ENCODE measurements at regions of chr9 and their contacts with region 1.

Region 1: GRCh38 chr9:5186416-5187169 is 1.2 kb upstream of the INSL6 start:
- DNase-seq: peak; percentile 48
- ATAC-seq: peak; percentile 85
- H3K4me3 ChIP-seq: no peak overlapping the region
- H3K27ac ChIP-seq: no peak overlapping the region
- H3K4me1 ChIP-seq: no peaks in the 10 kb centered on the region
- H3K27me3 ChIP-seq: no peaks in the 10 kb centered on the region
- CTCF ChIP-seq: peak; percentile 65 to 74 (median 71); a peak in 5 of 6 replicates
- POLR2A ChIP-seq: no peak
- RAD21 ChIP-seq: peak; percentile 82

Region 2: GRCh38 chr9:4750023-4750673 is 436.4 kb before region 1 on chr9:
- CTCF ChIA-PET with region 1: no interaction called
- POLR2A ChIA-PET with region 1: no interaction called
- RAD21 ChIA-PET with region 1: no interaction called
- intact Hi-C with region 1: loop called (anchors 5 kb)
- DNase-seq: no peak
- ATAC-seq: peak; percentile 84
- H3K4me3 ChIP-seq: no peak overlapping the region
- H3K27ac ChIP-seq: no peak overlapping the region
- H3K4me1 ChIP-seq: no peaks in the 10 kb centered on the region
- H3K27me3 ChIP-seq: no peaks in the 10 kb centered on the region
- CTCF ChIP-seq: peak; percentile 51 to 67 (median 66)
- POLR2A ChIP-seq: no peak
- RAD21 ChIP-seq: peak; percentile 61

Region 3: DNA sequence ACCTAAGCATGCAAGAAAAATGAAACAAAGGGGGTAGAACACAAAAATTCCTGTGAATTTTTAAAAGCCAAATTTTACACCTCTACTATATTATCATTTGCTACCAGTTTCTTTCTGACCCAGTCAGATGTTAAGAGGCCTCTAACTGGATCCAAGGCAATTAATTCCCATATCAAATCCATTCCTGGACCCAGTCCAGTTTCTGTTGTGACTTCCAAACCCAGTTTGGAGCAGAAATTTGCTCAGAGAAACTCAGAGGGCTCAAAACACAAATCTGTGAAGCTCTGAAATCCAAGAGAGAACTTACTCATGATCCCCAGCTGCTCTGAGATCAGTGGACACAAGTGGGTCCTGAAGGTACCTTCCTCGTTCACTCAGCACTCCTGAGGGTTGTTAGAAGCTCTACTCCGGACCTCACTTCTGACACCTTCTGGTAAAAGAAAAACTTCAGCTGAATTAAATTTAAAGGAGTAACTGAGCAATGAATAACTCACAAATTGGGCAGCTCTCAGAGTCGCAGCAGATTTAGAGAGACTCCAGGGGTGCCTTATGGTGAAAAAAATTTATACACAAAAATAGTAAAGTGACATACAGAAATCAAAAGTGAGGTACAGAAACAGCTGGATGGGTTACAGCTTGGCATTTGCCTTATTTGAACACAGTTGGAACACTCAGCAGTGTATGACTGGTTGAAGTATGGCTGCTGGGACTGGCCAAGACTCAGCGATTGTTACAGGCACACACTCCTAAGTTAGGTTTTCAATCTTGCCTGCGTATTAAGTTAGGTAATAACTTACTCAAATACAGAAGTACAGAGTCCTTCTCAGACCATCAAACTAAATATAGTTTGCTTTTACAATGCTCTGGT is 77.0 kb after region 1 on chr9:
- CTCF ChIA-PET with region 1: interaction called, 8 read pairs
- POLR2A ChIA-PET with region 1: no interaction called
- RAD21 ChIA-PET with region 1: interaction called in 1 of 2 experiments, 3 read pairs
- intact Hi-C with region 1: loop called (anchors 5 kb)
- DNase-seq: peak; percentile 12
- ATAC-seq: peak; percentile 87
- H3K4me3 ChIP-seq: no peak overlapping the region
- H3K27ac ChIP-seq: no peak overlapping the region
- H3K4me1 ChIP-seq: no peaks in the 10 kb centered on the region
- H3K27me3 ChIP-seq: no peaks in the 10 kb centered on the region
- CTCF ChIP-seq: peak in 2 of 3 experiments; percentile 23 to 31; a peak in 2 of 6 replicates
- POLR2A ChIP-seq: no peak
- RAD21 ChIP-seq: peak; percentile 36

Region 4: DNA sequence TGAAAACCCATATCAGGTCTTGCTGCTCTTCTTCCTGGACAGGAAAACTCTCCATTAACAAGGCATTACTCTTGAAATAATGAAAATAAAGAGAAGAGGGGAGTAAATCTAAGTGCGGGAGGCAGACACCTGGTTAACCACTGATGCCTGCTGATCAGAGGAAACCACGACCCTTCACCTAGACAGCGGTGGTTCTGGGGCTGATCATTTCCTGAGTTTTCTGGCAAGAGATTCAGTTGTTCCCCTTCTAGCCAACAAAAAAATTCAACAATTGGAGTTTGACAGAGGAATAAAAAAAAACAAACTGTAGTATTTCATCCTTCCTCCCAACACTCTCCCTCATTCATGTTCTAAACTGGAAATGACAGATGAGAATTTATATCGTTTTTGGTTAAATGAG is 115.0 kb after region 1 on chr9:
- CTCF ChIA-PET with region 1: no interaction called
- POLR2A ChIA-PET with region 1: no interaction called
- RAD21 ChIA-PET with region 1: no interaction called
- intact Hi-C with region 1: no loop called
- DNase-seq: no peak
- ATAC-seq: no peak
- H3K4me3 ChIP-seq: no peak overlapping the region
- H3K27ac ChIP-seq: no peak overlapping the region
- H3K4me1 ChIP-seq: no peaks in the 10 kb centered on the region
- H3K27me3 ChIP-seq: no peaks in the 10 kb centered on the region
- CTCF ChIP-seq: no peak
- POLR2A ChIP-seq: no peak
- RAD21 ChIP-seq: no peak

Region 5: GRCh38 chr9:5425006-5425628 is 238.5 kb after region 1 on chr9:
- CTCF ChIA-PET with region 1: interaction called, 19 read pairs
- POLR2A ChIA-PET with region 1: no interaction called
- RAD21 ChIA-PET with region 1: interaction called in 1 of 2 experiments, 3 read pairs
- intact Hi-C with region 1: loop called (anchors 1 kb)
- DNase-seq: no peak
- ATAC-seq: peak; percentile 82
- H3K4me3 ChIP-seq: no peak overlapping the region
- H3K27ac ChIP-seq: no peak overlapping the region
- H3K4me1 ChIP-seq: no peaks in the 10 kb centered on the region
- H3K27me3 ChIP-seq: no peaks in the 10 kb centered on the region
- CTCF ChIP-seq: peak; percentile 40 to 71 (median 69); a peak in 5 of 6 replicates
- POLR2A ChIP-seq: no peak
- RAD21 ChIP-seq: peak; percentile 72

Region 6: GRCh38 chr9:5442400-5443011 is 255.9 kb after region 1 on chr9:
- CTCF ChIA-PET with region 1: interaction called, 22 read pairs
- POLR2A ChIA-PET with region 1: no interaction called
- RAD21 ChIA-PET with region 1: interaction called, 3 to 6 read pairs
- intact Hi-C with region 1: loop called (anchors 5 kb)
- DNase-seq: no peak
- ATAC-seq: peak; percentile 54
- H3K4me3 ChIP-seq: no peak overlapping the region
- H3K27ac ChIP-seq: no peak overlapping the region
- H3K4me1 ChIP-seq: peaks cover 13 to 33% of the 10 kb centered on the region in 2 experiments
- H3K27me3 ChIP-seq: no peaks in the 10 kb centered on the region
- CTCF ChIP-seq: peak; percentile 46 to 68 (median 53); a peak in 5 of 6 replicates
- POLR2A ChIP-seq: no peak
- RAD21 ChIP-seq: peak; percentile 71

Region 7: GRCh38 chr9:5468850-5469249 is 282.3 kb after region 1 on chr9:
- CTCF ChIA-PET with region 1: no interaction called
- POLR2A ChIA-PET with region 1: no interaction called
- RAD21 ChIA-PET with region 1: no interaction called
- intact Hi-C with region 1: no loop called
- DNase-seq: no peak
- ATAC-seq: no peak
- H3K4me3 ChIP-seq: no peak overlapping the region
- H3K27ac ChIP-seq: no peak overlapping the region
- H3K4me1 ChIP-seq: no peaks in the 10 kb centered on the region
- H3K27me3 ChIP-seq: no peaks in the 10 kb centered on the region
- CTCF ChIP-seq: no peak
- POLR2A ChIP-seq: no peak
- RAD21 ChIP-seq: no peak

Region 8: DNA sequence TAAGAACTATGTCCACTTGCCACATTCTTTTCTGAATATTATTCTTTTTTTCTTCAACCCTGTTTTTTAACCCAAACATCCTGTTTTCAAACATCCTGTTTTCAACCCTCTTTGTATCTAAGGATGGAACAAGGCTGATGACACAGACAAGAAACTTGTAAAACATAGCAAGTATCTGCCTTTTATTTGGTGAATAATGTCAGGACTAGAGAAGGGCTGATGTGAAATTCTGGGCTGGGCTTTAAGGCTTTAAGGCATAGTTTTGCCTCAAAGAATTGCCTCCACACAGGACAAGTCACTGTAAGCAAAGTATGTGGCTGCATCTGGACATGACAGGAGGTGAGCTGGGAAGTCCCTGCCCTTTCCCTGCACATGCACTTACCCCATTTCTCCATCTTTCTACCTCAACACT is 399.8 kb after region 1 on chr9:
- CTCF ChIA-PET with region 1: interaction called, 6 read pairs
- POLR2A ChIA-PET with region 1: no interaction called
- RAD21 ChIA-PET with region 1: no interaction called
- intact Hi-C with region 1: loop called (anchors 1 kb)
- DNase-seq: no peak
- ATAC-seq: no peak
- H3K4me3 ChIP-seq: no peak overlapping the region
- H3K27ac ChIP-seq: no peak overlapping the region
- H3K4me1 ChIP-seq: no peaks in the 10 kb centered on the region
- H3K27me3 ChIP-seq: no peaks in the 10 kb centered on the region
- CTCF ChIP-seq: no peak
- POLR2A ChIP-seq: no peak
- RAD21 ChIP-seq: no peak

Region 9: DNA sequence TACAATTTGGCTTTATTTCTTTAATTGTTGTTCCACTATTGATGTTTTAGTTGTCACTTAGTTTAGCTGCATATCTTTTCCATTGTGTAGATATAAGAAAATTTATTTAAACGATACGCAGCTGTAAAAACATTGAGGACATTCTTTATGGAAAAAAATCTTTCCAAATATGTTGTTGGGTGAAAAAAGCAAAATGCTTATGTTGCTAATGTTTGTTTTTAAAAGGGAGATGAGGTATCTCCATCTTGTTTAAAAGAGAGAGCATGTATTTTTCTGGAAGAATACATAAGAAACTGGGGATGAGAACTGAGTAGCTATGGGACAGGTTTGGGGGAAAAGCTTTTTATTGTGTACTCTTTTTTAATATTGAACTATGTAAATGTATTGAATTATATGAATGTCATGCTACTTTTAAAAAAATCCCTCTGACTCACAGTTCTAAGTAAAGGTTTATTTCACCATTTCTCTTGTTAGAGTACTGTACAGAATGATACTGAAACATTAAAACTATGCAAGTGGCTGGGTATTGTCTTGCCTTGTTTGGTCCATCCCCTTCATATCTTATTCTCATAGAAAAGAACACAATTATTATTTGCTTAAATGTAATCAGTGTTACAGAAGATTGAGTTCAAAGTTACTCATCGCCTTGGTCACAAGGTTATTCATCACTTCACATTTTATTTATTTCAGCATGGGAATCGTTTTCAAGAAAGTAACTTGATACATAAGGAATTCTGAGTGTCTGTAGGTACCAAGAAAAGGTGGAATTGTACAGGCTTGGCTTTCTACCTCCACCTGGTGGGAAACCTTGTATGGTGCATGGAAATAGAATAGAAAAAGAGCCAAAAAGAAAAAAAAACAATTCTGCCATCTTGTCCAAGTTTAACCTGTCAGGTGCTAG is 528.2 kb after region 1 on chr9:
- CTCF ChIA-PET with region 1: interaction called, 4 read pairs
- POLR2A ChIA-PET with region 1: no interaction called
- RAD21 ChIA-PET with region 1: no interaction called
- intact Hi-C with region 1: loop called (anchors 10 kb)
- DNase-seq: peak; percentile 27
- ATAC-seq: peak; percentile 72
- H3K4me3 ChIP-seq: no peak overlapping the region
- H3K27ac ChIP-seq: no peak overlapping the region
- H3K4me1 ChIP-seq: no peaks in the 10 kb centered on the region
- H3K27me3 ChIP-seq: no peaks in the 10 kb centered on the region
- CTCF ChIP-seq: peak; percentile 48 to 67 (median 64); a peak in 5 of 6 replicates
- POLR2A ChIP-seq: no peak
- RAD21 ChIP-seq: peak; percentile 73

Measured in HCT116 (cell line).